ENCODE measurements at regions of chr2 and their contacts with region 1.

Region 1: DNA sequence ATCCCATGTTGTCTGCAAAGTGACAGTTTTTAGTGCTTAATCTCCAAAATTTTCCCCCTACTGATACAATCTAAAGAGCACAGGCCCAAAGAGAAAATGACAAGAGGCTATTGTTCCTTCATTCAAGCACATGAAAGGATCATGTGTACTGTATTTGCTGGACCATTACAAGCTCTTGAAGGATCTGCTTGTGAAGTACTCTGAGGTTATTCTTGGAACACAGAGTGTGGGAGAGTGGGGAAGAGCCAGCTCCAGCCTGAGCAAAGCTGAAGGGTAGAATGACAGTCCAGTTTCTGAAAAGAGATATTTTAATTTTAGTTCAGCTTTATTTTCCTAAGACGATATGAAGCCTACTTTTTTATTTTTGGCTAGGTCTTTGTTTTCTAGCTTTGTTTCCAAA is 112.2 kb downstream of the GALNT3 start:
- DNase-seq: peak in 2 of 10 donors; percentile 21 to 88

Region 2: GRCh38 chr2:165634855-165635254 is 47.0 kb before region 1 on chr2:
- intact Hi-C with region 1: loop called (anchors 10 kb)
- DNase-seq: peak; percentile 57 to 97 (median 79)